Mammary epithelial cell (primary cell): ENCODE measurements at regions of chr20 and their contacts with region 1.

Region 1: GRCh38 chr20:40427026-40427425 is 262.0 kb downstream of the MAFB start:
- DNase-seq: no peak
- H3K4me3 ChIP-seq: no peak overlapping the region
- H3K27ac ChIP-seq: no peak overlapping the region
- H3K4me1 ChIP-seq: peaks cover 5% of the 10 kb centered on the region
- H3K27me3 ChIP-seq: no peaks in the 10 kb centered on the region
- CTCF ChIP-seq: no peak

Region 2: GRCh38 chr20:40471261-40471629 is 44.2 kb after region 1 on chr20:
- CTCF ChIA-PET with region 1: no interaction called
- dilution Hi-C with region 1: loop called (anchors 5 kb)
- in situ Hi-C with region 1: no loop called
- intact Hi-C with region 1: no loop called
- DNase-seq: no peak
- H3K4me3 ChIP-seq: no peak overlapping the region
- H3K27ac ChIP-seq: no peak overlapping the region
- H3K4me1 ChIP-seq: no peaks in the 10 kb centered on the region
- H3K27me3 ChIP-seq: no peaks in the 10 kb centered on the region
- CTCF ChIP-seq: peak; percentile 13 to 39